Naive thymus-derived CD4-positive, alpha-beta T cell (primary cell): ENCODE measurements at regions of chr2 and their contacts with region 1.

Region 1: DNA sequence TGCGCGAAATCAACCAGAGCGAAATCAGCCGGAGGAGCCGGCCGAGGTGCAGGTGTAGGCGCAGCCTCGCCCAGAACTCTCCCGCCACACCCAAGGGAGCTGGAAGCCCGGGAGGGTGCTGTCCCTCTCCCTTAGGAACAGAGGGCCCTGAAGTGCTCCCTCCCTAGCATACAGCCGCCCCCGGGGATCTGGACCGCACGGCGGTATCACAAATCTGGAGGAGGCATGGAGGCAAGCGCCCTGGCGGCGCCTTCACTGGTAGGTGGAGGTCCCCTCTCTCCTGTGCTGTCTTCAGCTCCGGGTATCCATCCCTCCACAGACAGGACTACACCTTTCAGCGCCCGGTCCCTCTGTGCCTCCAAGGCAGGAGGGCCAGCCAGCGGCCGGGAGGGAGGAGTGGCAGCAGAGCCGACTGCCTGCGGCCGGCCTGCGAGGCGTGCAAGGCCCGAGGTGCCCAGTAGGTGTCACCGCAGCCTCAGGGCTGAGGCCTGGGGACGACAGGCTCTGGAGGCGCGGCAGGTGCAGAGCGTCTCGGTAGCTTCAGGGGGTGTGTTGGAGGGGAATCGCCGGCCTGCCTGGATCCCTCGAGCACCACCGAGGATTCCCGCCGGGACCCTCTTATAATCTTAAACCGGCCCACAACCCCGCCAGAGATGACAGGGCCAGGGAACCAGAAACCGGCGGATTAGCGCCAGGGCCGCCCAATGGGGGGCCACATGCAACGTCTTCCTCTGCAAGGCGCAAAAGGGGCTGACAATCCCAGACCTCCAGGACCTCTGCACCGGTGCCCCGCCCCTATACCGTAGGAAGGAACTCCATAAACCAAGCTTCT is 2.8 kb downstream of the IHH start:
- DNase-seq: peak; percentile 45 to 82 (median 68)
- ATAC-seq: peak; percentile 94
- H3K4me3 ChIP-seq: peak overlapping the region; percentile 27
- H3K4me3 Mint-ChIP-seq: peak overlapping the region; percentile 40 to 82 (median 57)
- H3K27ac ChIP-seq: no peak overlapping the region
- H3K27ac Mint-ChIP-seq: no peak overlapping the region
- H3K4me1 ChIP-seq: peaks cover 3 to 27% of the 10 kb centered on the region in 2 donors
- H3K4me1 Mint-ChIP-seq: peaks cover 8 to 22% (median 16%) of the 10 kb centered on the region in 7 donors
- H3K27me3 ChIP-seq: peaks cover 15 to 16% of the 10 kb centered on the region in 2 donors
- H3K27me3 Mint-ChIP-seq: peaks cover 50 to 75% (median 53%) of the 10 kb centered on the region in 5 donors

Region 2: GRCh38 chr2:218979846-218980734 is 77.8 kb before region 1 on chr2:
- CTCF ChIA-PET with region 1: interaction called, 3 read pairs
- POLR2A ChIA-PET with region 1: no interaction called
- intact Hi-C with region 1: loop called in 1 of 2 experiments (anchors 5 kb)
- DNase-seq: peak; percentile 65 to 85 (median 81)
- ATAC-seq: peak; percentile 93
- H3K4me3 ChIP-seq: peak overlapping the region; percentile 53
- H3K4me3 Mint-ChIP-seq: peak overlapping the region; percentile 66 to 94 (median 73)
- H3K27ac ChIP-seq: no peak overlapping the region
- H3K27ac Mint-ChIP-seq: peak overlapping the region in 1 of 9 donors; percentile 58
- H3K4me1 ChIP-seq: peaks cover 13 to 23% of the 10 kb centered on the region in 2 donors
- H3K4me1 Mint-ChIP-seq: peaks cover 14 to 40% (median 20%) of the 10 kb centered on the region in 7 donors
- H3K27me3 ChIP-seq: peaks cover 17 to 35% of the 10 kb centered on the region in 2 donors
- H3K27me3 Mint-ChIP-seq: peaks cover 60 to 80% (median 70%) of the 10 kb centered on the region in 5 donors

Region 3: DNA sequence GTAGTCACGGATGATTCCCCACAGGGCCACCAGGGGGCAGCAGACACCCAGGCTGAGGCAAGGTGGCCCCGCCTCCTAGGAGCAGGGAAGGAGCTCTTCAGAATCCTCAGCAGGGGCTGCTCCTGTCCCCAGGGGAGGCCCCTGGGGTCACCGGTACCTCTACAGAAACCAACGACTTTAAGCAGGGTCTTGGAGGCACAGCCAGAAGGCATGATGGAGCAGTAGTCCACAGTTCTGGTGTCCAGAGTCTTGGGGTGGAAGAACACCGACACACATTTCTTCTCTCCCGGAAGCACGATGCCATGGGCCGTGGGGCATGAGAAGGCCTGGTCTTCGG is 28.1 kb before region 1 on chr2:
- CTCF ChIA-PET with region 1: interaction called, 3 read pairs
- POLR2A ChIA-PET with region 1: no interaction called
- intact Hi-C with region 1: loop called in 1 of 2 experiments (anchors 1 kb)
- DNase-seq: peak; percentile 60 to 79 (median 71)
- ATAC-seq: peak; percentile 90
- H3K4me3 ChIP-seq: no peak overlapping the region
- H3K4me3 Mint-ChIP-seq: no peak overlapping the region
- H3K27ac ChIP-seq: no peak overlapping the region
- H3K27ac Mint-ChIP-seq: peak overlapping the region in 1 of 9 donors; percentile 14
- H3K4me1 ChIP-seq: no peaks in the 10 kb centered on the region
- H3K4me1 Mint-ChIP-seq: no peaks in the 10 kb centered on the region
- H3K27me3 ChIP-seq: peaks cover 0 to 3% of the 10 kb centered on the region in 2 donors
- H3K27me3 Mint-ChIP-seq: peaks cover 21 to 41% (median 28%) of the 10 kb centered on the region in 5 donors

Region 4: DNA sequence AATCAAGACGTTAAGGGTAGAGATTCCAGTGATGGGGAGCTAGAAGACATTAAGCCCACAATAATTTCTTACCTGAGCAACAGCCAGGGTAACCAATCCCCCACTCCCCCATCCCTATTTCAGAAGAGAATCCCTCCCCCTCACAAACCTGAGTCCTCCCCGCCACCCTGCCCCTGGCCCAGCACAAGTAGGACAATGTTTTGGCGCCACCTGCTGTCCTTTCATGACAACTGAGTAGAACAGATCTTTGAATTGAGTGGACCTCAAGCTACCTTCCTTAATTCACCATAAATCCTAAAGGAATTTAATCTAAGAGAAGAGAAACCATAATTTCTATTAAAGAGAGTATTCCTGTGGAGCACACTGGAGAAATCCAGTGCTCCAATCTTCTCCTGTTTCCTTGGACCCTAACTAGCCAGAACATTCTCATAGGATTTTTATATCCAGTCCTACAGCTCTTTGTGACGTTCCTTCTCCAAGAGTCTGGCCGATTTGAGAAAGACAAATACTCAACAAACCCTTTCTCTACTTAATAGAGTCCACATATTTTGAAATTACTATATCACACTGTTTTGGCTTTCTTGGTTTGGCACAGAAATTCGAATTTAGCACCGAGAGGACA is 61.6 kb after region 1 on chr2:
- CTCF ChIA-PET with region 1: interaction called, 29 read pairs
- POLR2A ChIA-PET with region 1: no interaction called
- intact Hi-C with region 1: loop called (anchors 1 kb)
- DNase-seq: peak; percentile 14 to 50 (median 34)
- ATAC-seq: peak; percentile 66
- H3K4me3 ChIP-seq: no peak overlapping the region
- H3K4me3 Mint-ChIP-seq: no peak overlapping the region
- H3K27ac ChIP-seq: no peak overlapping the region
- H3K27ac Mint-ChIP-seq: no peak overlapping the region
- H3K4me1 ChIP-seq: peaks cover 0 to 7% of the 10 kb centered on the region in 2 donors
- H3K4me1 Mint-ChIP-seq: peaks cover 4 to 22% (median 11%) of the 10 kb centered on the region in 7 donors
- H3K27me3 ChIP-seq: no peaks in the 10 kb centered on the region
- H3K27me3 Mint-ChIP-seq: no peaks in the 10 kb centered on the region

Region 5: DNA sequence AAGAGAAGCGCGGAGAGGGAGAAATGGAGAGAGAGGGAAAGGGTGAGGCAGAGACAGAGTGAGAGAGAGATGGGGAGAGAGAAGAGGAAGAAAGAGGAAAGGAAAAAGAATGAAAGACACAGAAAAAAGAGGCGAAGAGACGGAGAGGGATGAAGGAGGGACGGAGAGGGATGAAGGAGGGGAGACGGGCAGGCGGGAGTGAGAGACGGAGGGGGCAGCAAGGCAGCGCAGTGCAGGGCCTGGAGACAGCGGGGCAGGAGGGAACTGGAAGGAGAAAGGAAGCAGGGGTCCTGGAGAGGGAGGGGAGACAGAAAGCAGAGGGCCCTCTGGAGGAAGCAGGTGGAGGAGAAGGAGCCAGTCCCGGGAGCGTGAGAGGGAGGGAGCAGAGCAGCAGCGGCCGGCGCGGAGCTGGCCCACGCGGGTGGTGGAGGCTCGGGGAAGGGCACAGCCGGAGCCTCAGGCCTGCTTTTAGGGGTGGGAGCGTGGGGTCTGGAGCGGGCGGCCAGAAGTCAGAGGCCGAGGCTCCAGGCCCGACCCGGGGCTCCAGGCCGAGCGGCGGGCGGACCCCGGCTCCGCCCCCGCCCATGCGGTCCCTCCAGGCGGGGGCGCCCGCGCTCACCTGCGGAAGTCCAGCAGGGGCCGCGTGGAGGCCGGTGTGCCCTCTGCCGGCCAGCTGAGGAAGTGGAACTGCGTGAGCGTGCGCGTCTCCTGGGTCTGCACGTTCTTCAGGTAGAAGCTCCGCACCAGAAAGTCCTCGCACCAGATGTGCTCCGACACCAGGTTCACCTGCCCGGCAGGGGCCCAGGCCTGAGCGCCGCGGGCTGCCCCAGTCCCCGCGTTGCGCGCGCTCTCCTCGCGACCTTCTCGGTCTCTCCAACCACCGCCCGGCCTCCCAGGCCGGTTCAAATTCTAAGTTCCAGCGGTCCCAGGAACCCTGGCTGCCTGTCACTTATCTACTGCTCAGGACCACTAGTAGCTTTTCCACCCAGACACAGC is 236.7 kb after region 1 on chr2:
- CTCF ChIA-PET with region 1: no interaction called
- POLR2A ChIA-PET with region 1: no interaction called
- intact Hi-C with region 1: loop called (anchors 1 kb)
- DNase-seq: peak; percentile 80 to 93 (median 90)
- ATAC-seq: peak; percentile 99
- H3K4me3 ChIP-seq: peak overlapping the region; percentile 47
- H3K4me3 Mint-ChIP-seq: peak overlapping the region; percentile 68 to 89 (median 82)
- H3K27ac ChIP-seq: peak overlapping the region; percentile 79
- H3K27ac Mint-ChIP-seq: peak overlapping the region; percentile 56 to 88 (median 84)
- H3K4me1 ChIP-seq: peaks cover 2 to 20% of the 10 kb centered on the region in 2 donors
- H3K4me1 Mint-ChIP-seq: peaks cover 11 to 34% (median 27%) of the 10 kb centered on the region in 7 donors
- H3K27me3 ChIP-seq: no peaks in the 10 kb centered on the region
- H3K27me3 Mint-ChIP-seq: peaks cover 0 to 9% (median 0%) of the 10 kb centered on the region in 5 donors